AG04449 (cell line): ENCODE measurements at regions of chr3 and their contacts with region 1.

Region 1: DNA sequence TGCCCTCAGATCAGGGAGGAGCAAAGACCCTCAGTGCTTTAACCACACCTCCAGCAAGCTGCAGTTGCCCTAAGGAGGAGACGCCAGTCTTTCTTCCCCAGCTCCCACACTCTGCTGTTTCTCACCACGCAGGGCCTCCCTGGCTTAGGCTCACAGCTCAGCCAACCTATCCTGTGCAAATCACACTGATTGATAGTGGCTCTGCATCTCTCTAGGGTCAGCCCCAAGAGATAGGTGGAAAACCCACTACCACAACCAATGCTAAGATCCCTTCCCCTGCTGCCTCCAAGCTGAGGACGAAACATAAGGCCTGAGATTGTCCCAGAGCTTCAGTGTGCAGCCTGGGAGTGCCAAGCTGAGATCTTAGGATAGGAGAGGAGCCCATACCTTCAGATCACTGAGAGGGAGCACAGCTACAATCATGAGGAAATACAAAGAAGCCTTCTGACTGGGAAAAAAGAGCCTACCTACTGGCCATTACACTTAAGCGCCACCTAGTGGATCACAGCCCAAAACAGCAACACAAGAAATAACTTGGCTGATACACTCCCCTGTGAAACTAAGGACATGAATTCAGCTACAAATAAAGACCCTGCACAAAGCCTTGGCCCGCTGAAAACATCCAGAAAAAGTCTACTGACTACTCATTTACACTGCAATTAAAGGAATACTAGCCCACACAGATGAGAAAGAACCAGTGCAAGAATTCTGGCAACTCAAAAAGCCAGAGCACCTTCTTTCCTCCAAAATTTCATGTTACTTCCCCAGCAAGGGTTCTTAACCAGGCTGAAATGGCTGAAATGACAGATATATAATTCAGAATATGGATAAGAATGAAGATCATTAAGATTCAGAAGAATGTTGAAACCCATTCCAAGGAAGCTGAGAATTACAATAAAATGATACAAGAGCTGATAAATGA is 271.5 kb upstream of the DCBLD2 start:
- DNase-seq: peak; percentile 34
- H3K4me3 ChIP-seq: no peak overlapping the region
- CTCF ChIP-seq: peak; percentile 70

Region 2: GRCh38 chr3:99114565-99115291 is 58.3 kb before region 1 on chr3:
- CTCF ChIA-PET with region 1: interaction called, 35 read pairs
- POLR2A ChIA-PET with region 1: no interaction called
- DNase-seq: no peak
- H3K4me3 ChIP-seq: no peak overlapping the region
- CTCF ChIP-seq: peak; percentile 86

Region 3: DNA sequence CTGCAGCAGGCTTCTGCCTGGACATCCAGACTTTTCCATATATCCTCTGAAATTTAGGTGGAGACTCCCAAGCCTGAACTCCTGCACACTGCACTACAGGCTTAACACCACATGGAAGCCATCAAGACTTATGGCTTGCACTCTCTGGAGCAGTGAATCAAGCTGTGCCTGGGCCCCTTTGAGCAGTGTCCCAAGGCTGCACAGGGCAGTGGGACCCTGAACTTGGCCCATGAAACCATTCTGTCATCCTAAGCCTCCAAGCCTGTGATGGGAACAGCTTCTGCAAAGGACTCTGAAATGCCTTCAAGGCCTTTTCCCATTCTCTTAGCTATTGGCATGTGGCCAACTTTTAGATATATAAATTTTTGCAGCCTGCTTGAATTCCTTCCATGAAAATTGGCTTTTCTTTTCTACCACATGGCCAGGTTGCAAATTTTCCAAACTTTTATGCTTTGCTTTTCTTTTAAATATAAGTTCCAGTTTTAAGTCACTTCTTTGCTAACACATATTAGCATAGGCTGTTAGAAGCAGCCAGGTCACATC is 13.7 kb before region 1 on chr3:
- CTCF ChIA-PET with region 1: interaction called, 29 read pairs
- POLR2A ChIA-PET with region 1: no interaction called
- DNase-seq: no peak
- H3K4me3 ChIP-seq: no peak overlapping the region
- CTCF ChIP-seq: no peak

Region 4: GRCh38 chr3:99191186-99191585 is 18.2 kb after region 1 on chr3:
- CTCF ChIA-PET with region 1: interaction called, 47 read pairs
- POLR2A ChIA-PET with region 1: no interaction called
- DNase-seq: no peak
- H3K4me3 ChIP-seq: no peak overlapping the region
- CTCF ChIP-seq: no peak

Region 5: GRCh38 chr3:99232696-99233095 is 59.7 kb after region 1 on chr3:
- CTCF ChIA-PET with region 1: no interaction called
- POLR2A ChIA-PET with region 1: no interaction called
- DNase-seq: no peak
- H3K4me3 ChIP-seq: no peak overlapping the region
- CTCF ChIP-seq: no peak

Region 6: GRCh38 chr3:99256788-99257187 is 83.8 kb after region 1 on chr3:
- CTCF ChIA-PET with region 1: interaction called, 18 read pairs
- POLR2A ChIA-PET with region 1: no interaction called
- DNase-seq: no peak
- H3K4me3 ChIP-seq: no peak overlapping the region
- CTCF ChIP-seq: no peak